GM23248 (cell line): ENCODE measurements at regions of chr9 and their contacts with region 1.

Region 1: DNA sequence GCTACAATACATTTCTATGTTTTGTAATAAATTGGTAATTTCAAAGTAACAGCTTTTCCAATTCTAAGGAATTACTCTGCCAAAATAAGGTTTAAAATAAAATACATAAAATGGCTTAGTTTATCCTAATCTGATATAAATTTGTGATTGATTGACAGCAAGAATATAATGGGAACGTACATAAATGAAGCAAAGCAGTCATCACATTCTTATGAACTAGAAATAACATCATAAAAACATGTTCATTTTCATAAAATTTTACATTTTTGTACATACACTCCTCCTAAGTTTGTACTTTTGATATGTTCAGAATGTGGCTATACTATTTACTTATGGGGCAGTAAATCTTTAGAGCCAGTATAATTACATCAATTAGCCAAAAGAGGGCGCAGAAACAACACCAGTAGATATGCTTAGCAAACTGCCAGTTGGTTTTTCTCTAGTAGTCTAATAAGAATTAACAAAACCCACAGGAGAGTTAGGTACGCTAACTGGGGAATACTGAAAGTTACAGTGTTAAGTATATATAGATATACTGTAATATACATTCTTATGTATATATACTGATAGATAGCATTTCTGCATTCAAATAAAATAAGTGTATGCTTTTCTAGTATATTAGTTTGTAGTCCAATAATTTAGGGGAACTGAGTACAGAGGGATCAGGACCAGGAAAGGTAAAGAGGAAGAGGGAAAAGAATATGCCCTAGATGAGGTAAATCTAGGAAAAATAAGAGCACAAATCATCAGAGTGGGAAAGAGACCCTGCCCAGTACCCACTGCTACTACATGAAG is 76.8 kb downstream of the ZDHHC21 start:
- DNase-seq: peak; percentile 78
- H3K4me3 ChIP-seq: no peak overlapping the region
- H3K27ac ChIP-seq: no peak overlapping the region
- H3K4me1 ChIP-seq: no peaks in the 10 kb centered on the region
- H3K27me3 ChIP-seq: no peaks in the 10 kb centered on the region

Region 2: DNA sequence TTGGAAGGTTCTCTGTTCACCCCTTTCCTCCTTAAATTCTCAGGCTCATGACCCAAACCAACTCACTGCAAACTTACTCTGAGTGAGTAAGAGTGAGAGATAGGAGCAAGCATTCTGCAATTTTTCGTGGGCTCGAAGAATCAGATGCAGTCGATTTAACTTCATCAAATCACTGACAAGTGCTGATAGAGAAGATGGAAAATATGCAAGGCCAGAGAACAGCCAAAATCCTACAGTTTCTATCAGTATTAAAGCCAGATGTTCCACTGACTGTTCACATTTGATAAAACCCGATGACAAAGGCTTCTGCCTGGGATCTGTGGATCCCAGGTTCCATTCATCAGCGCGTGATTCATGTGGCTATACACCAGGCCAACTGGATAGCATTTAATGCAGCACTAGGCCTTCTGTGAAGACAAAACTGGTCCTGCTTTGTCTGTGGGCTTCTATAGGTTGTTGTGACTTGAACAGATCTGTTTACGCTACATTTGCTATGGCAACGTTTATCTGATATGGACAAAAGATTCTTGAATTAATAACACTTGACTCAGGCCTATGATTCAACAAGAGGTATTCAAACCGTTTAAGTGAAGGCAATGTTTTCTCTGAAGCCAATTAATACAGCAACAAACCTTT is 553.7 kb before region 1 on chr9:
- in situ Hi-C with region 1: no loop called
- DNase-seq: peak; percentile 73
- H3K4me3 ChIP-seq: no peak overlapping the region
- H3K27ac ChIP-seq: peak overlapping the region; percentile 25
- H3K4me1 ChIP-seq: peaks cover 10% of the 10 kb centered on the region
- H3K27me3 ChIP-seq: no peaks in the 10 kb centered on the region

Region 3: DNA sequence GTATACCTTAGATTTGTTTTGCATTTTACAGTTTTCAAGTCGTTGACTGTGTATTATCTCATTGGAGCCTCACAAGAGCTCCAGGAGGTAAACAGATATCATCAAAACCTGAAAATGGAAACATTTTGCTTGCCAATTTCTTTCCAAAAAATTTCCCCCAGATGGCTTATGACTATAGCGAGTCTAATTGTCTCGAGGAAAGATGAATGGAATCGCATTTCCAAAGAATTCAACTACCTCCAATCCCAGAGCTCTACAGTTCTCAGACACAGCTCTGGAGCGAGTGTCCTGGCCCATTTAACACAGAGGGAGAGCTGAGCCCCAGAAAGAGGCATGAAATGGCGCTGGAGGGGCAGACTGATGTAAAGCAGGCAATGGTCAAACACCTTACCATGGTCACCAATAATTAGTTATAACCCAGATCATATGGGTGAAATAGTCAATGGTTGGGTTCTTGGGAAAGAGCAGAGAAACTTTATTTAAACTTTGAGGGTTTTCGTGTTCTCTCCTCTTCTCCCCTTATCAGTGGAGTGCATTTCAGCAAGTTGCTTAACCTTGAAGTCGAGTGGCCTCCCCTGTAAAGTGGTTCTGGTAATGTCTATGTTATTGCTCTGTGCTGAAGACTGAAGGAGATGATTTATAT is 91.4 kb before region 1 on chr9:
- in situ Hi-C with region 1: no loop called
- DNase-seq: no peak
- H3K4me3 ChIP-seq: no peak overlapping the region
- H3K27ac ChIP-seq: no peak overlapping the region
- H3K4me1 ChIP-seq: no peaks in the 10 kb centered on the region
- H3K27me3 ChIP-seq: peaks cover 15% of the 10 kb centered on the region

Region 4: DNA sequence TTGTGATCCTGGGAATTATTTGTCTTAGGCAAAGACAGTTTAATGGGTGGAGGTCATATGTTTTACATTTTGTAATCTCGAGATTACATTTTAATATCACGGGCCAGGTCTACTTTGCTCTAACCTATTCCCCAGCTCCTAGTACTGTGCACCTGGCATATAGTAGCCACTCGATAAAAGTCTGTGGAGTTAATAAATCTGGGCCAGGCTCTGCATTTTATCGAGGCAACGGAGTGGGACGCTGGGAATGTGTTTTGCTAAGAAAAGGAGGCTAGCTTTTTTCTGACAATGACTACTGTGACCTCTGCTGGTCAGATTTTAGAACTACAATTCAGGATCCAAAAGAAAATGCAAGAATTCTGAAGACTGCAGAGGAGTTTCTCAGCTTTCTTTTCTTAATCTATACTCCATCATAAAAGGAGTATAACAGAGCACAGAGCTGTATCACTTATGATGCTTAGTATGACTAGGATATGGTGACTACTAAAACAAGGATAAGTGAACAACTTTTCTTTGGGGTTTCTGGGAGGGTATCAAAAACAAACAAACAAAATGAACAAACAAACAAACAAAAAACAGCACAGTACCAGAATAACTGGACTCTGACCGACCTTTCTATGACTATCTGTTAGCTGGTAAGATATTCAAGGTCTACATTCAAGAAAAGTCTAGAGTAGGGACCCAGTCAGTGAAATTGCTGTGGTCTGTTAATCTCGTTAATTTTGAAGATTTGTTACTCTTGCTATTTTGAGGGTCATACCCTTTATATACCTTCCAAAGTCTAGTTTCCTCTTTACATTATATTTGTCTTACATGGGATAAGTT is 152.2 kb after region 1 on chr9:
- in situ Hi-C with region 1: loop called (anchors 10 kb)
- DNase-seq: peak; percentile 69
- H3K4me3 ChIP-seq: peak overlapping the region; percentile 58
- H3K27ac ChIP-seq: no peak overlapping the region
- H3K4me1 ChIP-seq: no peaks in the 10 kb centered on the region
- H3K27me3 ChIP-seq: no peaks in the 10 kb centered on the region

Region 5: GRCh38 chr9:15135164-15135792 is 518.9 kb after region 1 on chr9:
- in situ Hi-C with region 1: loop called (anchors 25 kb)
- DNase-seq: peak; percentile 86
- H3K4me3 ChIP-seq: peak overlapping the region; percentile 57
- H3K27ac ChIP-seq: no peak overlapping the region
- H3K4me1 ChIP-seq: no peaks in the 10 kb centered on the region
- H3K27me3 ChIP-seq: no peaks in the 10 kb centered on the region